ENCODE measurements at regions of chr10 and their contacts with region 1.

Region 1: GRCh38 chr10:62422068-62422590 is 48.0 kb downstream of the ZNF365 start:
- DNase-seq: no peak
- H3K4me3 ChIP-seq: no peak overlapping the region
- H3K4me3 Mint-ChIP-seq: no peak overlapping the region
- H3K27ac ChIP-seq: no peak overlapping the region
- H3K27ac Mint-ChIP-seq: no peak overlapping the region
- H3K4me1 ChIP-seq: no peaks in the 10 kb centered on the region
- H3K4me1 Mint-ChIP-seq: no peaks in the 10 kb centered on the region
- H3K27me3 ChIP-seq: peaks cover under 1 to 4% of the 10 kb centered on the region in 2 donors
- H3K27me3 Mint-ChIP-seq: peaks cover 0 to 6% (median 3%) of the 10 kb centered on the region in 3 donors
- CTCF ChIP-seq: no peak

Region 2: DNA sequence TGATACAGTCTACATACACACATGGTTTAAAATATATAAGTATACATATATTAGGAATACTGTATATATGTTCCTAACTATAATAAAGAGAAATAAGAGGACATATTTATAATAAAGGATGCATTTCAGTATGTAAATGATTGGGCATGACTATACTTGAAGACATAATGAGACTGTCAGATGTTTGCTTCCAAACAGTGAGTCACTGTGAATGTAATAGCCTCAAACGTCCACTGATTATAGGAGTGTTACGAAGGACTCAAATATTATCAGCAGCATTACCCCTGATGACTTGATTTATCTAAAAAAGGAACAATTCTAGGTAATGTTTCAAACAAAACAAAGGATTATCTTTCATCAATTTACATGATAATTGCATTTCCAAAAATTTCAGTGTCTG is 671.1 kb after region 1 on chr10:
- intact Hi-C with region 1: loop called in 1 of 2 experiments (anchors 10 kb)
- DNase-seq: no peak
- H3K4me3 ChIP-seq: no peak overlapping the region
- H3K4me3 Mint-ChIP-seq: no peak overlapping the region
- H3K27ac ChIP-seq: no peak overlapping the region
- H3K27ac Mint-ChIP-seq: no peak overlapping the region
- H3K4me1 ChIP-seq: no peaks in the 10 kb centered on the region
- H3K4me1 Mint-ChIP-seq: no peaks in the 10 kb centered on the region
- H3K27me3 ChIP-seq: no peaks in the 10 kb centered on the region
- H3K27me3 Mint-ChIP-seq: peaks cover 8 to 15% (median 9%) of the 10 kb centered on the region in 3 donors
- CTCF ChIP-seq: no peak